ENCODE measurements at regions of chr17 and their contacts with region 1.

Region 1: DNA sequence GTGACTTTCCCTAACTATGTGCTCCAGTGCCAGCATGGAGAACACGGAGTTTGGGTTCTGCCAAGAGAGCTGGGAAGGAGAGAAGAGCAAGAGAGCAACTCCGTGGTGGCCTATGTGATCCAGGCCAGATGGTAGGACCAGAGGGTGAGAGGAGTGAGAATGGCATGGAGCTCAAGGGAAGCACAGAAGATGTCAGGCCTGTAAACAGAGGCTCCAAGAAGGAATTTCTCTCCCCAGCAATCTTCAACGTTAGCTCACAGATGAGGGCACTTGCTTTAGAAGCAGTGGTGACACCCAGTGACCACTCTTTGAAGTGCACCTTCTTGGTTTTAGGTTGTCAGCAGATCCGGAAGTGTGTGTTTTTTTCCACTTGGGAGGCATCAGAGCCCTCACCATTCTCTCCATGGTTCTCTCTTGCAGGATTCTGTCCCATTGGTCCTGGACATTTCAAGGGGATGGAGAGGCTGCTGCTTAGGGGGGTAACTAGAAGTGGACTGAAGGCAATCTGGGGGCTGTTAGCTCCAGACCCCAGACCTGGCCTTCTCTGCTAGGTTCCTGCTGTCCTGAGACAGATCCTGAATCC is 18.1 kb upstream of the TMEM98 start:
- DNase-seq: peak; percentile 81
- CTCF ChIP-seq: peak; percentile 63

Region 2: GRCh38 chr17:32461853-32462617 is 447.8 kb before region 1 on chr17:
- in situ Hi-C with region 1: loop called (anchors 25 kb)
- DNase-seq: peak; percentile 60
- CTCF ChIP-seq: peak; percentile 24

Region 3: DNA sequence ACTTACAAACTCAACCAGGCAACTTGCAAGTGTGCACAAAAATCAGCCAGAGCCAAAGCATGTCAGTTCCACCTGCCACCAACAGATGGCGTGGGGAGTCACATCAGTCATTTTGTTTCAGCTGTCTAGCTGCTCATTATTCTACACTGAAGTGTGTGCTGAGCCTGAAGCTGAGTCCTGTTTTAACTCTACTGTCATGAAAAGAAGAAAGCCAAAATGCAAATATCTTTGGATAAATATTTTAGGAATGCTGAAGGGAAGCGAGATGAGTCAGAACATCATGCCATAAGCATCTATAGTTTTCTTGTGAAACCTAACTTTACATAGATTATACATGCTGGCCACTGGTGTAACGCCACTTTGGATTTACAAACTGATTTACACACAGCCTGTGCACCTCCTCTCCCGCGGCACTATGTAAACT is 250.4 kb before region 1 on chr17:
- in situ Hi-C with region 1: loop called (anchors 10 kb)
- DNase-seq: peak; percentile 80
- CTCF ChIP-seq: peak; percentile 85